GM12878 (cell line): ENCODE measurements at regions of chr22 and their contacts with region 1.

Region 1: GRCh38 chr22:42437488-42438292 is 5.5 kb upstream of the NFAM1 start:
- DNase-seq: peak; percentile 84
- ATAC-seq: peak; percentile 76
- H3K4me3 ChIP-seq: peak overlapping the region; percentile 78
- H3K27ac ChIP-seq: peak overlapping the region; percentile 81
- H3K4me1 ChIP-seq: peaks cover 13% of the 10 kb centered on the region
- H3K27me3 ChIP-seq: no peaks in the 10 kb centered on the region
- CTCF ChIP-seq: peak; percentile 92 to 98 (median 98)
- EP300 ChIP-seq: peak; percentile 61 to 71; a peak in 2 of 4 replicates
- POLR2A ChIP-seq: no peak
- RAD21 ChIP-seq: peak; percentile 97

Region 2: DNA sequence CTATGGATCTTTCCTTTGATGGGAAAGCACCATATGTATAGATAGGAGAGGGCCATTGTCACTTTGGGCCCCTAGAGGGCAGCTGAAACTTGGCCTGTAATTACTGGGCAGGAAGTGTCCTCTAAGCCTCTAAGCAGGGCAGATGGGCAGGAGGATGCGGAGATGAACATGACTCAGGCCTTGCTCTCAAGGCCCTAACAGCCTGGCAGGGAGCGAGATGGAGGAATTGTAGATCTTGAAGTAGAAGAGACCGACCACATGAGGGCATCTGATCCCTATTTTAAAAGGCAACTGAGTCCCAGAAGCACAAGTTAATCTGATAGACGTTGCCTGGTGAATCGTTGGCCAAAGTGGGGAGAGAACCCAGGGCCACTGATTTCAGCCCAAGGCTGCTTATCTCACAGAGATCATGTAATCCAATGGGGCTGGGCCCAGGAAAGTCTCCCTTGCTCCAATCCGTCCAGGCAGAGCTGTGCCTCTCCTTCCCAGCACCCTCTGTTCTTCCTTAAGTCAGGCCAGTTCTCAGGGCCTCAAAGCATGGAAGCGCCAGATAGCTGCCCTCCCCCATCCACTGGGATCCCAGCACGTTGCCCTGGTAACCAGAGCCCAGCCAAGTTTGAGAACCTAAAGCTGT is 471.0 kb before region 1 on chr22:
- CTCF ChIA-PET with region 1: interaction called, 5 read pairs
- POLR2A ChIA-PET with region 1: interaction called, 3 read pairs
- RAD21 ChIA-PET with region 1: interaction called, 4 read pairs
- SMC1A ChIA-PET with region 1: interaction called, 6 read pairs
- in situ Hi-C with region 1: loop called (anchors 5 kb)
- intact Hi-C with region 1: no loop called
- DNase-seq: peak; percentile 54
- ATAC-seq: peak; percentile 89
- H3K4me3 ChIP-seq: no peak overlapping the region
- H3K27ac ChIP-seq: no peak overlapping the region
- H3K4me1 ChIP-seq: no peaks in the 10 kb centered on the region
- H3K27me3 ChIP-seq: no peaks in the 10 kb centered on the region
- CTCF ChIP-seq: peak; percentile 39 to 69 (median 67); a peak in 5 of 6 replicates
- EP300 ChIP-seq: no peak
- POLR2A ChIP-seq: no peak
- RAD21 ChIP-seq: peak; percentile 76

Region 3: GRCh38 chr22:42180349-42180842 is 257.3 kb before region 1 on chr22:
- CTCF ChIA-PET with region 1: interaction called, 133 read pairs
- POLR2A ChIA-PET with region 1: interaction called, 18 read pairs
- RAD21 ChIA-PET with region 1: interaction called, 53 read pairs
- SMC1A ChIA-PET with region 1: interaction called, 132 read pairs
- in situ Hi-C with region 1: no loop called
- intact Hi-C with region 1: no loop called
- DNase-seq: no peak
- ATAC-seq: peak; percentile 27
- H3K4me3 ChIP-seq: no peak overlapping the region
- H3K27ac ChIP-seq: peak overlapping the region; percentile 66
- H3K4me1 ChIP-seq: peaks cover 23% of the 10 kb centered on the region
- H3K27me3 ChIP-seq: no peaks in the 10 kb centered on the region
- CTCF ChIP-seq: no peak
- EP300 ChIP-seq: no peak
- POLR2A ChIP-seq: no peak
- RAD21 ChIP-seq: no peak

Region 4: GRCh38 chr22:42369245-42370041 is 68.2 kb before region 1 on chr22:
- CTCF ChIA-PET with region 1: interaction called, 3 read pairs
- POLR2A ChIA-PET with region 1: no interaction called
- RAD21 ChIA-PET with region 1: interaction called, 9 read pairs
- SMC1A ChIA-PET with region 1: interaction called, 6 read pairs
- in situ Hi-C with region 1: no loop called
- intact Hi-C with region 1: loop called (anchors 1 kb)
- DNase-seq: peak; percentile 71
- ATAC-seq: peak; percentile 99
- H3K4me3 ChIP-seq: peak overlapping the region; percentile 81
- H3K27ac ChIP-seq: no peak overlapping the region
- H3K4me1 ChIP-seq: peaks cover 12% of the 10 kb centered on the region
- H3K27me3 ChIP-seq: peaks cover 15 to 20% of the 10 kb centered on the region in 2 experiments; a peak in 3 of 4 replicates
- CTCF ChIP-seq: no peak
- EP300 ChIP-seq: no peak
- POLR2A ChIP-seq: peak; percentile 61
- RAD21 ChIP-seq: no peak

Region 5: DNA sequence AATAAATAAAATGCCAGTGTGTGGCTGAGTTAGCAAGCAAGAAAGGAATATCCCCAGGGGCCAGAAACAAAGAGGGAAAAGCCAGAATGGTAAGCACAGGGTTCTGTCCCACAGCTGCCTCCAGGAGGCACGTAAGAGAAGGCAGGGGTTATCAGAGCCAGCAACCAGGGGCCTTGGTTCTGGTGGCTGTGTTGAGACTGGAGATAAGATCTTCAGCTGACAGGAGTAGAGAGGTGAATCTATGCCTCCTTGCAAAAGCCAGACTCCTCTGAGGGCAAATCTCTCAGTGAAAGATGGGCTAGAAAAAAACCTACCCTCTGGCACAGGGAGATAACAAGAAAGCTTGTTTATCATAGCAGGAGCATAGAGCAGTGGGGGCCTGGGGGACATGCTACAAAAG is 24.3 kb after region 1 on chr22:
- CTCF ChIA-PET with region 1: interaction called, 102 read pairs
- POLR2A ChIA-PET with region 1: interaction called, 5 read pairs
- RAD21 ChIA-PET with region 1: interaction called, 97 read pairs
- SMC1A ChIA-PET with region 1: interaction called, 52 read pairs
- in situ Hi-C with region 1: no loop called
- intact Hi-C with region 1: loop called (anchors 1 kb)
- DNase-seq: no peak
- ATAC-seq: no peak
- H3K4me3 ChIP-seq: no peak overlapping the region
- H3K27ac ChIP-seq: no peak overlapping the region
- H3K4me1 ChIP-seq: peaks cover 10% of the 10 kb centered on the region
- H3K27me3 ChIP-seq: no peaks in the 10 kb centered on the region
- CTCF ChIP-seq: no peak
- EP300 ChIP-seq: no peak
- POLR2A ChIP-seq: no peak
- RAD21 ChIP-seq: no peak